ENCODE measurements at regions of chr3 and their contacts with region 1.

Region 1: GRCh38 chr3:73605412-73605811 is 19.3 kb downstream of the PDZRN3 start:
- DNase-seq: no peak
- H3K4me3 ChIP-seq: no peak overlapping the region
- H3K27me3 ChIP-seq: no peaks in the 10 kb centered on the region
- CTCF ChIP-seq: no peak

Region 2: DNA sequence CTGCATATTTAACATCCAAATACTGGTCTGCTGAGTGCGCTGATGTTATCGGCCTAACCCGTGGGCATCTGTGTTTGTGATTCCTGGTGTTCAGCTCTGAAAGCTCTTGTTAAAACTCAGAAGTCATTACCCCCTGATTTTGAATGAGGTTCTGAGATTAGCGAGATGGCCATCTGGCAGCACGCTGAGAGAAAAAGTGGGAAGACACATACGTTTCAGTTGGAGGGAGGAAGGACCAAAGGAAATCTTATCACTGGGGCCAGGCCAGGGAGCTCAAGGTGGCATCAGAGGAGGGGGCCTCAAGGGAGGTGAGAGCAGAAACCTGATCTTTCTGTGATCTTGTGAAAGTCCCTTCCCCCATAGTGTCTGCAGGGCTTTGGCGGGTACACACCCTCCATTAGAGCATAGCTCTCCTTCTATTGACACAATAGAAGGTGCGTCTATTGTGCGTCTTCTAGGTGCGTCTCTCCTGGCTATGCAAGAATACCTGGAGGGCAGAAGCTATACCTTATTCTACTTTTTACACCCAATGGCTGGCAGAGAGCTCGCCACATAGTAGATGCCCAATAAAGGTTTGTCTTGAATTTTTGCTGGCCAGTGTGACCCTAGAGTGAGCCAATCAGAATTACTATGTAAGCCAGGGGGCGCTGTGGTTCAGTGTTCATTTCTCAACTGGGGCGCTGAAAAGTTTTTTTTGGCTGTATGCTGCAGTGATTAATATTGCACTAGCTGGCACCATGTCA is 939.5 kb before region 1 on chr3:
- CTCF ChIA-PET with region 1: no interaction called
- POLR2A ChIA-PET with region 1: no interaction called
- DNase-seq: no peak
- H3K4me3 ChIP-seq: no peak overlapping the region
- H3K27me3 ChIP-seq: no peaks in the 10 kb centered on the region; the same call in 1 of the 2 replicates
- CTCF ChIP-seq: peak; percentile 32; the same call in 1 of the 2 replicates

Region 3: GRCh38 chr3:73637042-73637441 is 31.6 kb after region 1 on chr3:
- CTCF ChIA-PET with region 1: no interaction called
- POLR2A ChIA-PET with region 1: interaction called, 13 read pairs
- DNase-seq: no peak
- H3K4me3 ChIP-seq: no peak overlapping the region
- H3K27me3 ChIP-seq: no peaks in the 10 kb centered on the region
- CTCF ChIP-seq: no peak